ENCODE measurements at regions of chr1 and their contacts with region 1.

Region 1: GRCh38 chr1:111346089-111346885 is 55.6 kb downstream of the CHIA start:
- DNase-seq: peak; percentile 75 to 96 (median 87)
- ATAC-seq: peak; percentile 86
- H3K4me3 ChIP-seq: peak overlapping the region; percentile 67 to 68
- H3K4me3 Mint-ChIP-seq: peak overlapping the region; percentile 89
- H3K27ac ChIP-seq: peak overlapping the region; percentile 51 to 63
- H3K27ac Mint-ChIP-seq: peak overlapping the region; percentile 90
- H3K4me1 ChIP-seq: no peaks in the 10 kb centered on the region
- H3K4me1 Mint-ChIP-seq: peaks cover 23% of the 10 kb centered on the region
- H3K27me3 ChIP-seq: no peaks in the 10 kb centered on the region
- H3K27me3 Mint-ChIP-seq: no peaks in the 10 kb centered on the region
- CTCF ChIP-seq: no peak

Region 2: DNA sequence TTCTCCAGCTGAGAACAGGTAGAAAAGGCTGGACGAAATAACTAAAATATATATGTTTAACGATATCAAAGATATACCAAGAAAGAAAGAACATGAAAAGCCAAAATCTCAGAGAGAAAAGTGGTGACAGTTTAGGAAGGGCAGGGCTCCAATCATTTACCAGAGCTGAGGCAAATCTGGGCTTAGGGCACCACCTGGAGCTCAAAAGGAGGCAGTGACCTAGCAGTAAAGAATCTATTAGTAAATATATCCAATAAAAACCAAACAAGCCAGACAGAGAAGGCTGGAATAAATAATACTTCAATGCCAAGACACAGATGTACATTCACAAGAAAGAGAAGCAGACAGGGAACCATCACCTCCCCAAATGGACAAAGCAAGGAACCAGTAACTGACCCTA is 12.1 kb before region 1 on chr1:
- CTCF ChIA-PET with region 1: interaction called, 11 read pairs
- POLR2A ChIA-PET with region 1: no interaction called
- intact Hi-C with region 1: no loop called
- DNase-seq: peak; percentile 19 to 82 (median 57)
- ATAC-seq: peak; percentile 87
- H3K4me3 ChIP-seq: no peak overlapping the region
- H3K4me3 Mint-ChIP-seq: no peak overlapping the region
- H3K27ac ChIP-seq: no peak overlapping the region
- H3K27ac Mint-ChIP-seq: no peak overlapping the region
- H3K4me1 ChIP-seq: no peaks in the 10 kb centered on the region
- H3K4me1 Mint-ChIP-seq: peaks cover 6% of the 10 kb centered on the region
- H3K27me3 ChIP-seq: no peaks in the 10 kb centered on the region
- H3K27me3 Mint-ChIP-seq: no peaks in the 10 kb centered on the region
- CTCF ChIP-seq: peak; percentile 73

Measured in CD8-positive, alpha-beta T cell (primary cell).